OCI-LY7 (cell line): ENCODE measurements at regions of chr13 and their contacts with region 1.

Region 1: DNA sequence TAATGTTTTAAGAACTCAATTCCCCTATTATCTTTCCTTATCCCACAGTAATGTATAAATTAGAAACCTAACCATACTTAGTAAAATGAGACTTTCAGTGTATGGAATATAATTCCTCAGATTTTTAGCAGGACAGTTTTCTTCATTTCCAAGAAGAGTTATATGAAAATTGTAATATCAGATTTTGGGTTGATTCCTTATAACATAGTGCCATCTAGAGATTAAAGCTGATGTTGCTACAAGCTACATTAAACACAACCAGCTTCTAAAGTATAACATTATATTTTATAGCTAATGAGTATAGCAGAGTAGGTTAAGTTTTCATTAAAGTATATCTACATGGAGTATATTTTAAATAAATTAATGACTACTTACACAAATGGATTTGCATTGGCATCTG is 99.7 kb upstream of the MIR17HG start:
- DNase-seq: peak; percentile 50
- H3K4me3 ChIP-seq: no peak overlapping the region
- H3K27ac ChIP-seq: no peak overlapping the region
- H3K4me1 ChIP-seq: no peaks in the 10 kb centered on the region
- CTCF ChIP-seq: no peak

Region 2: GRCh38 chr13:90846936-90847335 is 400.8 kb before region 1 on chr13:
- CTCF ChIA-PET with region 1: no interaction called
- POLR2A ChIA-PET with region 1: no interaction called
- intact Hi-C with region 1: no loop called
- DNase-seq: no peak
- H3K4me3 ChIP-seq: no peak overlapping the region
- H3K27ac ChIP-seq: no peak overlapping the region
- H3K4me1 ChIP-seq: no peaks in the 10 kb centered on the region
- CTCF ChIP-seq: no peak

Region 3: GRCh38 chr13:91133941-91134802 is 113.6 kb before region 1 on chr13:
- CTCF ChIA-PET with region 1: no interaction called
- POLR2A ChIA-PET with region 1: no interaction called
- intact Hi-C with region 1: loop called (anchors 1 kb)
- DNase-seq: peak; percentile 88
- H3K4me3 ChIP-seq: no peak overlapping the region
- H3K27ac ChIP-seq: no peak overlapping the region
- H3K4me1 ChIP-seq: no peaks in the 10 kb centered on the region
- CTCF ChIP-seq: no peak

Region 4: DNA sequence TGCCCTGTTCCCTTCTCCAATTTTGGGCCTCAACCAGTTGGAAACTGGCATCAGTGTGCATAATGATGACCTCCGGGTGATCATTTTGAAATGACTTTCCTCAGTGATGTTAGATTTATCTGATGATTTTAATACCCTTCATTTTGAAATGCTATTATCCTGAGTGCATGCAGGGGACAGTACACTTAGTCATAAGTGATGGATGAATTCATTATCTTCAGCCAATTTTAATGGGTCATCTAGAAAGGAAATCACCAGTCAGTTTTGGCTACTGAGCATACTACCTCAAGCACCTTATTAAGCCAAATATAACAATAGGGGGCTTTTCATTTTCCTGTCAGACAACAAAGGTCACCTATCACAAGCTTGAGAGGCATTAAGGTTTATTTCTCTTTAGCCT is 18.8 kb before region 1 on chr13:
- CTCF ChIA-PET with region 1: no interaction called
- POLR2A ChIA-PET with region 1: interaction called, 63 read pairs
- intact Hi-C with region 1: no loop called
- DNase-seq: no peak
- H3K4me3 ChIP-seq: no peak overlapping the region
- H3K27ac ChIP-seq: no peak overlapping the region
- H3K4me1 ChIP-seq: no peaks in the 10 kb centered on the region
- CTCF ChIP-seq: no peak

Region 5: GRCh38 chr13:91291078-91291477 is 43.3 kb after region 1 on chr13:
- CTCF ChIA-PET with region 1: no interaction called
- POLR2A ChIA-PET with region 1: no interaction called
- intact Hi-C with region 1: no loop called
- DNase-seq: no peak
- H3K4me3 ChIP-seq: no peak overlapping the region
- H3K27ac ChIP-seq: no peak overlapping the region
- H3K4me1 ChIP-seq: no peaks in the 10 kb centered on the region
- CTCF ChIP-seq: no peak